H1 (cell line): ENCODE measurements at regions of chr16 and their contacts with region 1.

Region 1: DNA sequence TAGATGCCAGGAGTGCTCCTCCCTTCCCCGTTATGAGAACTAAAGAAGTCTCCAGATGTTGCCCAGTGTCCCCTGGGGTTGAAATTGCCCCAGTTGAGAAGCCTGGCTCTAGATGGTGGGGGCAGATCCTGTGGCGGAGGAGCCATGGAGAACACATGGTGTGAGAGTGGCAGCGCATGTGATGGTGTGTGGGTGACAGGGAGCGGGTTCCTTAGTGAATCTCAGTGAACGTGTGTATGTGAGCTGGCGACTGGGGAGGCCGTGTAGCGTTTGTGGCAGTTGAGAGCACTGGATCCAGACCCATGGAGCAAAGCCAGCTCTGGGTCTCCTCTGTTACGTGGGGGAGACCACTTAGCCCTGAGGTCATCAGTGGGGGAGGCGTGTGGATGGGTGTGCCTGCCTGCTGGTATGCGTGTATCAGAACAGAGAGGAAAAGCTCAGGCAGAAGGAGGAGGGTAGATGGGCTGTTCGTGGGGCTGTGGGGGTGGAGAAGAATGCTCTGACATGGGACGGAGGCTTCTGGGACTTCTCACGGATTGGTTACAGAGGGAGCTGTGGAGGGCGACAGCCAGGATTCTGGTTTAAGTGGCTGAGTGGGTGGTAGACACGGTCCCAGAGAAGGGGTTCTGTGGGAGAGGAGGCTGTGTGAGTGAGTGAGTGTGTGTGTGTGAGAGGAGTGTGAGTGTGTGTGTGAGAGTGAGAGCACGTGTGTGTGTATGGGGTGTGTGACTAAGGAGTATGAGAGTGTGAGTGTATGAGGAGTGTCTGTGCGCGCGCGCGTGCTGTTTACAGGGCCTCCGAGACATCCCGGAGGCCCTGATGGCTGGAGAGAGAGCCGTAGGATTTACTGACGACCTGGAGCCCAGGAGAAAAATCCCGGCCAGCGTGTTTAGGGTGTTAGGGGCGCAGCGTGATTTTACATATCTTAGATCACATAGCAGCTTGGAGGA is 193.8 kb downstream of the SNX29 start:
- DNase-seq: no peak
- H3K4me3 ChIP-seq: no peak overlapping the region
- H3K27ac ChIP-seq: no peak overlapping the region; the same call in 1 of the 2 replicates
- H3K4me1 ChIP-seq: no peaks in the 10 kb centered on the region
- H3K27me3 ChIP-seq: no peaks in the 10 kb centered on the region
- CTCF ChIP-seq: no peak
- EP300 ChIP-seq: no peak
- POLR2A ChIP-seq: no peak
- RAD21 ChIP-seq: no peak

Region 2: GRCh38 chr16:12057266-12057665 is 113.1 kb before region 1 on chr16:
- CTCF ChIA-PET with region 1: no interaction called
- POLR2A ChIA-PET with region 1: no interaction called
- DNase-seq: no peak
- H3K4me3 ChIP-seq: no peak overlapping the region
- H3K27ac ChIP-seq: no peak overlapping the region
- H3K4me1 ChIP-seq: no peaks in the 10 kb centered on the region
- H3K27me3 ChIP-seq: no peaks in the 10 kb centered on the region
- CTCF ChIP-seq: peak in 1 of 3 experiments; percentile 16; a peak in 1 of 4 replicates
- EP300 ChIP-seq: no peak
- POLR2A ChIP-seq: no peak
- RAD21 ChIP-seq: no peak

Region 3: DNA sequence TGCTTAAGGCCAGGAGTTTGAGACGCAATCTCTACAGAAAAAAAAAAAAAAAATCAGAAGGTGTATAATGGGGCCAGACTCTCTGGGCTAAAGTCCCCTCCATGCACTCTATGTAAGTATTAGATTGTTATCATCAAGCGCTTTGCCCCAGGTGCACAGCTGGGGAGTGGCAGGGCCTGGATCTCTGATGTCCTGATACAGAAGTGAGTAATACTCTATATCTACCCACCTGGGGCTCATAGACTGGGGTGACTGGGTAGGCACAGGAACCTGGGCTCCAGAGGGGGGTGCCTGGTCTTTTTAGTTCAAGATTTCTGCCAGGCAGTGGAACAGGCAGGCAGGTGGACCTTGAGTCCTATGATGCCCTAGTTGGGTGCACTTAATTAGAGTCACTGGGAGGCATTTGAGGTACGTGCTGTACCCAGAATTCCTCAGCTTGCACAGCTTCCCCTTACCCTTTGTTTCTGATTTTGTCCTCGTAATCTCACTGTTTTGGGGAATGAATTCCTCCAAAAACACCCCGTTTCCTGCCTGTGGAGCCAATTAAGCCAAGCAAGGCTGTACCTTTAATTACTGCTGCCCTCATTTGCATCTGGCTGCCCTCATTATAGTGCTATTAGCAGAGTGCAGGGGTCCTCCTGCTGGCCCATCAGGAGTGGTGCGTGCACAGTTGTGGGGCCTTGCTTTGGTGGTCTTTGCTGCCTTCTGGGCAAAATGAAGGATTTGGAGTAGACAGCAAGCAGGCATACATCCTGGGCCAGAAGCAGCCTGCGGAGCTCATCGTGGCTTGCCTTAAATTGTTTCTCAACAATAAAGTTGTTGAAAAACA is 45.1 kb after region 1 on chr16:
- CTCF ChIA-PET with region 1: interaction called, 12 read pairs
- POLR2A ChIA-PET with region 1: interaction called, 3 read pairs
- DNase-seq: peak; percentile 27 to 67
- H3K4me3 ChIP-seq: no peak overlapping the region
- H3K27ac ChIP-seq: no peak overlapping the region
- H3K4me1 ChIP-seq: peaks cover 4 to 13% (median 9%) of the 10 kb centered on the region in 4 experiments; a peak in 6 of 7 replicates
- H3K27me3 ChIP-seq: no peaks in the 10 kb centered on the region
- CTCF ChIP-seq: peak; percentile 78 to 90 (median 87)
- EP300 ChIP-seq: no peak
- POLR2A ChIP-seq: no peak
- RAD21 ChIP-seq: peak; percentile 86 to 88